ENCODE measurements at regions of chr4 and their contacts with region 1.

Region 1: DNA sequence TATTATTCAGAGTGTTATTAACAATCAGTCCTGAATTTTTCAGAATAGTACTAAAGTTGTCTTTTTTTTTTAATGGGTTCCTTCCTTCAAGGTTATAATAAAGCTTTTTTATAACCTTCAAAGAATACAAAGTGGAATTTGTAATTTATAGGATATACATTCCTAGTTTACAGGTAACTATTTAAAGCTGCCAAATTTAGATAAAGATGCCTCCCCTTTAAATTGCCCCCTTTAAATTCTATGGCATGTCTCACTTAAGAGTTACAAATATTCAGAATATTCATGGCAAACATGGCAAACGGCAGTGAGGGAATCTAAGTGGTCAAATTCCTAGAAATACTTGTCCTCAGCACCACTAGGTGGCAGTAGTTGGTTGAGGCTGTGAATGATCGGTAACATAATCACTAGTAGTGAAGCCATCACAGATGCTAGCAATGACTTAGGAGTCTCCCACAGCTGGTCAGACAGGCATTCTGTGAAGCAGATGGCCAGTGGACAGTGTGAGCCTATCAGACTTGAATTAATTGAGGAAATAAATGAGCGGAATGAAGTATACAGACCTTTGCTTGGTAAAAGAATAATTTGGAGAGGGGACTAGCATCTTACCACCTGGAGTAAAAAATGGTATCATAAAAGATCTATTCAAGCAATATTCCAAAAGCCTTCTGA is 86.4 kb downstream of the CBR4 start:
- DNase-seq: peak; percentile 30 to 39
- H3K4me3 ChIP-seq: no peak overlapping the region
- H3K27ac ChIP-seq: no peak overlapping the region
- H3K4me1 ChIP-seq: no peaks in the 10 kb centered on the region
- H3K27me3 ChIP-seq: no peaks in the 10 kb centered on the region
- CTCF ChIP-seq: peak; percentile 73

Region 2: GRCh38 chr4:168183717-168184608 is 739.7 kb before region 1 on chr4:
- CTCF ChIA-PET with region 1: no interaction called
- POLR2A ChIA-PET with region 1: no interaction called
- intact Hi-C with region 1: loop called (anchors 2 kb)
- DNase-seq: no peak
- H3K4me3 ChIP-seq: no peak overlapping the region
- H3K27ac ChIP-seq: no peak overlapping the region
- H3K4me1 ChIP-seq: no peaks in the 10 kb centered on the region
- H3K27me3 ChIP-seq: no peaks in the 10 kb centered on the region
- CTCF ChIP-seq: peak; percentile 78

Region 3: DNA sequence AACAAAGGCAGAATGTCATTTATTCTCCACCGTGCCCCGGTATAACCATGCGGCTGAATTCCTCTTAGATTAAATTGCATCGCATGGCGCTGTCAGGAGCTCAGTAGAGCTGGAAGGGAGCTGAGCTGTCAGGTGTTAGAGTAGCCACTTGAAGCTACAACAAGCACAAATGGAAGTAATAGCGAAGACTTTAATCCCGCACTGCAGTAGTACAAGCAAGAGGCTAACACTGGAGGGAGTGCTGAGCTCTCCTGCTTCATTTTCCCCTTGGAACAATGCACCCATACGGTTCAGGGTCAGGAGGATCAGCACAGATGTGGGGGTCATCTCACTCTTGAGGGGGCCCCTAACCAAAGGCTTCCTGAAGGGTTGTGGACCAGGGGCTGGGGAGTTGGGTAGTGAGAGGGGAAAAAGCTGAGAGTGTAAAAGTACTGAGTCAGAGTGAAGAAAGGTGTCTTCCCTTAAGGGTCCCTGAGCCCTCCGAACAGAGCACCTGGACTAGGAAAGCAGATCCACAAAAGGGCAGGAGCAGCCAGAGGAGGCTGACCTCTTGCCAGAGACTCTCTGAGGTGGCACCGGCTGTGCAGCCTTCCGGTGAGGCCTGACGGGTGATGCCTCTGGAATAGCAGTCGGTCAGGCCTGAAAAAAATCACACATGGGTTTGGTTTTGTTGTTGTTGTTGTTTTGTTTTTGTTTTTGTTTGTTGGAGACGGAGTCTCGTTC is 122.4 kb after region 1 on chr4:
- CTCF ChIA-PET with region 1: no interaction called
- POLR2A ChIA-PET with region 1: no interaction called
- intact Hi-C with region 1: no loop called
- DNase-seq: no peak
- H3K4me3 ChIP-seq: no peak overlapping the region
- H3K27ac ChIP-seq: no peak overlapping the region
- H3K4me1 ChIP-seq: no peaks in the 10 kb centered on the region
- H3K27me3 ChIP-seq: no peaks in the 10 kb centered on the region
- CTCF ChIP-seq: no peak

Region 4: GRCh38 chr4:169115897-169116254 is 192.2 kb after region 1 on chr4:
- CTCF ChIA-PET with region 1: no interaction called
- POLR2A ChIA-PET with region 1: no interaction called
- intact Hi-C with region 1: loop called (anchors 5 kb)
- DNase-seq: peak; percentile 78 to 93
- H3K4me3 ChIP-seq: no peak overlapping the region
- H3K27ac ChIP-seq: peak overlapping the region; percentile 98
- H3K4me1 ChIP-seq: peaks cover 25% of the 10 kb centered on the region
- H3K27me3 ChIP-seq: no peaks in the 10 kb centered on the region
- CTCF ChIP-seq: peak; percentile 49; the same call in 1 of the 2 replicates

Region 5: GRCh38 chr4:169485791-169486742 is 562.4 kb after region 1 on chr4:
- CTCF ChIA-PET with region 1: interaction called, 3 read pairs
- POLR2A ChIA-PET with region 1: no interaction called
- intact Hi-C with region 1: loop called (anchors 1 kb)
- DNase-seq: peak; percentile 43 to 48
- H3K4me3 ChIP-seq: no peak overlapping the region
- H3K27ac ChIP-seq: no peak overlapping the region
- H3K4me1 ChIP-seq: peaks cover 4% of the 10 kb centered on the region; the same call in 1 of the 2 replicates
- H3K27me3 ChIP-seq: no peaks in the 10 kb centered on the region
- CTCF ChIP-seq: peak; percentile 68

Region 6: DNA sequence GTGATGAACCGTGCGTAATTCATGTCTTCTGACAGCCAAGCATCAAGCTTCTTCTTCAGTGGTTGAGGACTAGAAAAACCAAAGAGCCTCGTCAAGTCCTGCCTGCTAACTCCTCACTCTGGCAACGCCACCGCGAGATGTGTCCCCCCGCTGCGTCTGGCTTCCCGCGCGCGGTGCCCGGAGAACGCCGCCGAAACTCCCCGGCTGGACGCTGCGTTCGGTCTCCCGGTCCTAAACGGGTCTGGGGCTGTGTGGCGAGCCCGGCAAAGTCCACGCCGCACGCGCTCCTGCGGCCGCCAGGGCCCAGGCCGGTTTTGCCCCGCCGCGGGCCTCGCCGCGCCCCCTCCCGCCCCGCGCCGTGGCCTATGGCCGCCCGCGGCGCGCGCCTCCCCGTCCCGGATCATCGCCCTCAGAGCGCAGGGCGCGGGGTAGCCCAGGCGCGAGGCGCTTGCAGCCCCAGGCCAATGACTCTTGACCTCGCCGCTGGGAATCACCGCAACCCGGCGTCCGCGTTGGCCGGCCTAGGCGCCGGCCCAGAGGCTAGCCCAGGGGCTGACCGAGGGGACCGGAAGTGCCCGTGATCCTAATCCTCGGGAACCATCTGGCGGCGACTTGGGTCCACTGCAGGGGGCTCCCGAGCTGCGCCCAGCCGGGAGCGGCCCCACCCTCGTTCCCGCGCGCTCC is 1166.2 kb after region 1 on chr4 and contains the start of gene AADAT:
- CTCF ChIA-PET with region 1: no interaction called
- POLR2A ChIA-PET with region 1: no interaction called
- intact Hi-C with region 1: loop called (anchors 2 kb)
- DNase-seq: peak; percentile 44 to 77
- H3K4me3 ChIP-seq: peak within 1 kb of the TSS; percentile 67
- H3K27ac ChIP-seq: no peak within 1 kb of the TSS
- H3K4me1 ChIP-seq: 0 out of 2 replicates have a peak, but pooled peaks cover 5% of the 10 kb centered on the region
- H3K27me3 ChIP-seq: no peaks in the 10 kb centered on the region
- CTCF ChIP-seq: peak; percentile 71
- total RNA-seq, gene AADAT: 2.6 and 3.2 TPM in 2 replicates